ENCODE measurements at regions of chr1 and their contacts with region 1.

Region 1: DNA sequence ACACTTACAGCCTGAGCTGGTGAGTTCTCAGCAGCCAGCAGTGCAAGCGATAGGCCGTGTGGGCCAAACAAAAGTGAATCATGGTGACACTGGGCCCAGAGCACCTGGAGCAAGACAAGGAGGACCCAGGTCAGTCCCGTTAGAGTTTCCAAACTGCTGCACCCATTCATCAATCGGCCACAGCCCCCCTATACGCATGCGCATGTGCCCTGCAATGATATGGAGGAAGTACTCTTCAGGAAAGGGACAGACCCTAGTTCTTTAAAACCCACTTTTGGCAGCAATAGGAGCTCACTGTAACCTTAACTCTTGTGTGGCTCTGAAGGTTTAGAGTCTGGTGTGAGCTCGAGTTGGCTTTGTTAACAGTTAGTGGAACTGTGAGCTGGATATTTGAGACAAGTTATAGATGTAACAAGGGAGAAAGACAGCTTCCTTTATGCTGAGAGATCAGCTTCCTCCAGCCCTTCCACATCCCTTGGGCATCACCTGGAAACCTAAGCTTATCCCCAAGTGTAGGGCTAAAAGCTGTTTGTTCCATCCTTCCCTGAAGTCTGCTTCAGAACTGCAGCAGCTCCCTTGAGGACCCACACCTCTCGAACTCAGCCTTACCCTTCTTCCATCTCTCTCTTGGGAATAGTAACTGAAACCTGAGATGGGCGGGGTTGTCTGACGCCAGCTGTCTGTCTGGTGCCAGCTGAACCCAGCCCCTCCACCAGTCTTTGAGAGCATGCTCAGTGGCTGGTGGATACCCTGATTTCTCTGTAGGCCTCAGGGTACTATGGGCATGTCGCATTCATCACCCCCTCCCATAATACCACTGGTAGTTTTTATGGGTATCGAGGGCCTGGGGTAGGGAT is 17.7 kb downstream of the NMNAT1 start:
- DNase-seq: peak; percentile 88
- H3K4me3 ChIP-seq: no peak overlapping the region
- H3K27ac ChIP-seq: no peak overlapping the region
- H3K4me1 ChIP-seq: peaks cover 24% of the 10 kb centered on the region
- H3K27me3 ChIP-seq: no peaks in the 10 kb centered on the region
- CTCF ChIP-seq: no peak

Region 2: GRCh38 chr1:9671377-9672140 is 289.4 kb before region 1 on chr1:
- CTCF ChIA-PET with region 1: interaction called, 12 read pairs
- POLR2A ChIA-PET with region 1: no interaction called
- intact Hi-C with region 1: no loop called
- DNase-seq: no peak
- H3K4me3 ChIP-seq: no peak overlapping the region
- H3K27ac ChIP-seq: no peak overlapping the region
- H3K4me1 ChIP-seq: no peaks in the 10 kb centered on the region
- H3K27me3 ChIP-seq: no peaks in the 10 kb centered on the region
- CTCF ChIP-seq: no peak

Region 3: GRCh38 chr1:9900142-9901043 is 60.5 kb before region 1 on chr1:
- CTCF ChIA-PET with region 1: no interaction called
- POLR2A ChIA-PET with region 1: no interaction called
- intact Hi-C with region 1: no loop called
- DNase-seq: no peak
- H3K4me3 ChIP-seq: no peak overlapping the region
- H3K27ac ChIP-seq: no peak overlapping the region
- H3K4me1 ChIP-seq: no peaks in the 10 kb centered on the region
- H3K27me3 ChIP-seq: no peaks in the 10 kb centered on the region
- CTCF ChIP-seq: no peak

Region 4: GRCh38 chr1:10209905-10210810 is 249.2 kb after region 1 on chr1 and contains the start of gene KIF1B:
- CTCF ChIA-PET with region 1: no interaction called
- POLR2A ChIA-PET with region 1: no interaction called
- intact Hi-C with region 1: no loop called
- DNase-seq: peak; percentile 99
- H3K4me3 ChIP-seq: peak within 1 kb of the TSS; percentile 90
- H3K27ac ChIP-seq: peak within 1 kb of the TSS; percentile 90
- H3K4me1 ChIP-seq: peaks cover 16% of the 10 kb centered on the region
- H3K27me3 ChIP-seq: no peaks in the 10 kb centered on the region
- CTCF ChIP-seq: peak; percentile 99
- total RNA-seq, gene KIF1B: 69.5 and 71.7 TPM in 2 replicates